ENCODE measurements at regions of chr14 and their contacts with region 1.

Region 1: DNA sequence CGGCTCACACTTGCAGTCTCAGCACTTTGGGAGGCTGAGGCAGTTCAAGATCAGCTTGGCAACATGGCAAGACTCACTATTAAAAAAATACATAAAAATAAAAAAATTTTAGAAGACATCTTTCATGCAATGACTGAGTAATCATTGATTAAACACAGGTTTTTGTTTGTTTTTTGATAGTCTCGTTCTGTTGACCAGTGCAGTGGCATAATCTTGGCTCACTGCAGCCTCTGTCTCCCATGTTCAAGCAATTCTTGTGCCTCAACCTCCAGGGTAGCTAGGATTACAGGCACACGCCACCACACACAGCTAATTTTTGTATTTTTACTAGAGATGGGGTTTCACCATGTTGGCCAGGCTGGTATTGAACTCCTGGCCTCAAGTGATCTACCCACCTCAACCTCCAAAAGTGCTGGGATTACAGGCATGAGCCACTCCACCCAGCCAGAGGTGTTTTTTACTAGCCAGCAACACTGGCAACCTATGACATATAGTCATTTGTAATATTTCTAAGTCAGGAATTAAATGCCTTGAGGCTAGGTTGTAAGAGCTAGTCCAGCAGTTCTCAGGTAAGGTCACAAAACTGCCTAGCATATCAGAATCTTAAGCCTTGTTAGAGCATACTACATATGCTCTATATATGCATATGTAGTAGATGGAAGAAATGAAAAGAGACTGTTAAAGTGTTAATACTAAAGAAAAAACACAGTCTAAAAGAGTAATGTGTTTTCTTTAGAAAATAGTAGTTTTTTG is 27.1 kb downstream of the HECTD1 start:
- DNase-seq: peak; percentile 44
- ATAC-seq: peak; percentile 91
- H3K4me3 ChIP-seq: no peak overlapping the region
- H3K27ac ChIP-seq: 0 out of 2 replicates have a peak overlapping the region, but pooled peaks have one; percentile 7
- H3K4me1 ChIP-seq: peaks cover 8% of the 10 kb centered on the region
- H3K27me3 ChIP-seq: no peaks in the 10 kb centered on the region
- CTCF ChIP-seq: no peak

Region 2: DNA sequence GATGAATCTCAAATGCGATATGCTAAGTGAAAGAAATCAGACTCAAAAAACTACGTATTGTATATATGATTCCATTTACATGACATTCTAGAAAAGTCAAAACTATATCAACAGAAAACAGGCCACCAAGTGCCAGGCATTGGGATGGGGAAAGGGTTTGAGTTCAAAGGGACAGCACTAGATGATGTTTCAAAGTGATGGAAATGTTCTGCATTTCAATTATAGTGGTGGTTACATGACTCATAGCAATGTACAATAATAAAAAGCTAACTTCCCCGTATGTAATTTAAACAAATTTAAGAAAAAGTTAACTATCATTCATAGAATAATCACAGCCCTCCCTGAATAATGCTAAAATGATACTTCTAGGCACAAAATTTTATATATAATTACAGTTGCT is 13.6 kb after region 1 on chr14:
- CTCF ChIA-PET with region 1: no interaction called
- POLR2A ChIA-PET with region 1: no interaction called
- intact Hi-C with region 1: loop called (anchors 2 kb)
- DNase-seq: peak; percentile 34
- ATAC-seq: peak; percentile 16; the same call in 1 of the 2 replicates
- H3K4me3 ChIP-seq: no peak overlapping the region
- H3K27ac ChIP-seq: peak overlapping the region; percentile 81
- H3K4me1 ChIP-seq: peaks cover 49% of the 10 kb centered on the region
- H3K27me3 ChIP-seq: no peaks in the 10 kb centered on the region
- CTCF ChIP-seq: no peak

Measured in PC-3 (cell line).